ENCODE measurements at regions of chr11 and their contacts with region 1.

Region 1: DNA sequence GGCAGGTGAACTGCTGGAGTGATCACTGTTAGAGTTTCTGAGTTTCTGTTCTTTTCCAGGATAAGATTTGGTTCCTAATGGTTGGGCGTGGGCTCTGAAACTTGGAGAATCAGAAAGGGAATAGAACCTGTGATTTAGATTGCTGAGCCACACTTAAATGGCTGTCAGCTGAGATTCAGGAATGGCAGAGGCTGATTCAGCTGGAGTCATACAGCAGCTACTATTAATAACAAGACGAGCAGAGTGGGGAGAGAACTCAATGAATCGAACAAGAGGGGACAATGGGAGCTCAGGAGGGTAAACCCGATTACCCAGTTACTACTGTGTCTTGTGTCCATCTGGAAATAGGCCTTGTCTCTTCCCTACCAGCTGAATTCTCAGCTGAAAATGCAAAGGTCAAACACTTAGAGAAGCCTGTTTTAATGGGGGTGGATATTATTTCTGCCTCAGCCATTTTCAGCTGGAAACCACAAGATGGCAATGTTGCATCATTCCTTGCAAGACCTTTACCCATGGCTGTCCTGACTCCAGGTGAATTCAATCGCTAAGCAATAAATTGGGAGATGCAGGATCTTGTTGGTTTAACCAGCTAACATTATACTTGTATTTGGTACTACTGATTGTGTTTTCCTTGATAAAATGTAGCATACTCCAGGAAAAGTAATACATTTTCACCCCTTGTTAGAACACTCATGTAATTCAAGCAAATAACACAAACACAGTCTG is 104.5 kb upstream of the RAG2 start:
- DNase-seq: no peak
- H3K4me3 ChIP-seq: no peak overlapping the region
- H3K27ac ChIP-seq: no peak overlapping the region
- H3K4me1 ChIP-seq: no peaks in the 10 kb centered on the region
- H3K27me3 ChIP-seq: no peaks in the 10 kb centered on the region
- CTCF ChIP-seq: peak; percentile 38 to 70 (median 62)
- POLR2A ChIP-seq: no peak

Region 2: DNA sequence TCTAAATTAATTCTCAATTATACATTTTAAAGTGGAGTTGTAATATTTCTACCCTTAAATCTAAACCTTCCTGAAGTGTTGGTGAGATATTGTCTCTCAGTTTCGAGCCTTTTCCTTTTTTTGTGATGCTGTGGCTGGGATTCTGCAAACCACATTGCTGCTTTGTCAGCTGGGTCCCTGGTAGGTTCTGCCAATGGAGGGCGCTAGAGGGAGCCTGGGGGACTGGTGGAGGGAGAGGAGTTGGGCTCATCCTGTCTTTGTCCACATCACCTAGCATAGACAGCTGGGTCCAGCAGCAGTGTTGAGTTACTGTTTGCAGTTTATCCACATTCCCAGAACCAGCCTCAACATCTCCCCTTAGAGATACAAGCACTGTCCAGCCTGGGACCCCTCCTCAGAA is 233.4 kb before region 1 on chr11:
- intact Hi-C with region 1: no loop called
- DNase-seq: no peak
- H3K4me3 ChIP-seq: no peak overlapping the region
- H3K27ac ChIP-seq: no peak overlapping the region
- H3K4me1 ChIP-seq: peaks cover 5 to 59% (median 7%) of the 10 kb centered on the region in 3 donors
- H3K27me3 ChIP-seq: no peaks in the 10 kb centered on the region
- CTCF ChIP-seq: peak in 1 of 6 experiments; percentile 14
- POLR2A ChIP-seq: no peak

Region 3: GRCh38 chr11:36746886-36747710 is 44.6 kb after region 1 on chr11:
- intact Hi-C with region 1: loop called (anchors 5 kb)
- DNase-seq: peak; percentile 10
- H3K4me3 ChIP-seq: no peak overlapping the region
- H3K27ac ChIP-seq: no peak overlapping the region
- H3K4me1 ChIP-seq: no peaks in the 10 kb centered on the region
- H3K27me3 ChIP-seq: peaks cover 0 to 25% (median 0%) of the 10 kb centered on the region in 4 donors
- CTCF ChIP-seq: peak; percentile 77 to 96 (median 91)
- POLR2A ChIP-seq: no peak

Region 4: GRCh38 chr11:37286890-37287289 is 584.4 kb after region 1 on chr11:
- intact Hi-C with region 1: no loop called
- DNase-seq: no peak
- H3K4me3 ChIP-seq: no peak overlapping the region
- H3K27ac ChIP-seq: no peak overlapping the region
- H3K4me1 ChIP-seq: no peaks in the 10 kb centered on the region
- H3K27me3 ChIP-seq: no peaks in the 10 kb centered on the region
- CTCF ChIP-seq: no peak
- POLR2A ChIP-seq: no peak